Colonic mucosa (tissue), 4 donors: ENCODE measurements at regions of chr7 and their contacts with region 1.

Region 1: DNA sequence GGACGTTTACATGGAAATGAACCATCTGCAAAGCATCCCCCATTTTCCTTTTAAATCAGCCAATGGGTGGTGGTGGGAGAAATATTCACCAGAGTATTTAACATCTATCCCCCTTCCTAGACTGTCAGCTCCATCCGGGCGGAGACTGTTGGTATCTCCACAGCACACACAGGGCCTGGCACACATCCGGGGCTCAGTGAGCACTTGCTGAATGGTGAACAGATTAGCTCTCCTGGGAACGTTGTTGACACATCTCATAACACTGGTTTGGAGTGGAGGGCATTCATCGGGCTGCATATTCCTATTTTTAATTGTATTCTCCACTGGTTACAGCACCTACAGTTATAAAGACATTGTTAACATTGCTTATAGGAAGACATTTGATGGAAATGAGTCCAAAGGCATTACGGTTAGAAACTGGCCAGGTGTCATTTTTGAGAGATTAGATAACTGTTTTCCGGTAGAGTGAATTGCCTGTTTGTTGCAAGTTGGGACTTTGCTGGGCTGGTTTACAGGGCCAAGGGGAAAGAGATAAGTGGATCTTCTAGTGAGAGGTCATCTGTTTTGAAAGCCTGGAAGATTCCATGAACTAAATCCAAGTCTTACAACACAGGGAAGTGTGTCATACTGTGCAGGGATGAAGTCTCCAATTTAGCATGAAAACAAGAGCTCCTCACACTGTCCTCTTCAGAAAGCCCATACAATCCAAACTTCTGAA is 101.8 kb downstream of the EGFR start:
- DNase-seq: no peak
- H3K4me3 ChIP-seq: no peak overlapping the region
- H3K27ac ChIP-seq: peak overlapping the region; percentile 38
- H3K4me1 ChIP-seq: no peaks in the 10 kb centered on the region
- H3K27me3 ChIP-seq: no peaks in the 10 kb centered on the region
- CTCF ChIP-seq: no peak

Region 2: GRCh38 chr7:55086413-55087201 is 34.0 kb before region 1 on chr7:
- intact Hi-C with region 1: loop called (anchors 5 kb)
- DNase-seq: no peak
- H3K4me3 ChIP-seq: no peak overlapping the region
- H3K27ac ChIP-seq: peak overlapping the region; percentile 25
- H3K4me1 ChIP-seq: no peaks in the 10 kb centered on the region
- H3K27me3 ChIP-seq: no peaks in the 10 kb centered on the region
- CTCF ChIP-seq: no peak